ENCODE measurements at regions of chr17 and their contacts with region 1.

Region 1: DNA sequence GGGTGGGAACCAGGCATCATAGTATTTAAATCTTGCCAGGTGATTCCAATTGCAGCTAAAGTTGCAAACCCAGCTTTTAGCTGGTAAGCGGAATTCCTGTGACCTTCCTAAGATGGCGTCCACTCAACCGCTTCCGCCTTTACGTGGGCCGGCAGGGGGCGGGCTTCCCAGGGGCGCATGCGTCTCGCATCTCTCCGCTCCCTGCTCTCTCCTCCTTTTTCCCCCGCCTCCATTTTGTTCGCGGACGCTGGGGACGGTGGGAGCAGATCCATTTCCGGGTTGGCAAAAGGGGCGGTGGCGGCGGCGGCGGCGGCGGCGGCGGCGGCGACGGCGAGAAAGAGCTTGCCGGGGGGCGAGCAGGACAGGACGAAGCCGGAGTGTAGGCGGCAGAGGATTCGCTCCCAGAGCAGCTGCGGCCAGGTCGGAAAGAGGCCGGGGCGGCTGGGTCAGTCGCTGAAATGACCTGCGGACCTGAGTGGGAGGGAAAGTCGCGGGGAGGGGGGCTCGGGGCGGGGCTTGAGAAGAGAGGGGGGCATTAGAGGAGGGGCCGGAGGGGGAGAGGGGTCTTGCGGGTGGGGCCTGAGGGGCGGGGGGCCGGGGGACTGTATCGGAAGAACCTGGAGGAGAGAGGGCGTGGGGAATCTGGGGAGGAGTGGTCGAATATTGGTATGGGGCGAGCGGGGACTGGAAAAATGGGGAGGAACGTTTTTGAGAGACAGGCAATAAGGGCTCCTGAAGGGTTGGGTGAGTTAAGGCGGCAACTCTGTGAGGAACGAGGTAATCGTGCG is at the start of gene WIPF2:
- DNase-seq: peak; percentile 89
- H3K4me3 ChIP-seq: peak within 1 kb of the TSS; percentile 96
- H3K27ac ChIP-seq: peak within 1 kb of the TSS; percentile 91
- H3K27me3 ChIP-seq: no peaks in the 10 kb centered on the region
- CTCF ChIP-seq: peak; percentile 79
- polyA plus RNA-seq, gene WIPF2: 8.1 and 8.6 TPM in 2 replicates

Region 2: GRCh38 chr17:40180694-40181093 is 38.6 kb before region 1 on chr17:
- CTCF ChIA-PET with region 1: no interaction called
- POLR2A ChIA-PET with region 1: no interaction called
- DNase-seq: no peak
- H3K4me3 ChIP-seq: no peak overlapping the region
- H3K27ac ChIP-seq: no peak overlapping the region
- H3K27me3 ChIP-seq: no peaks in the 10 kb centered on the region
- CTCF ChIP-seq: no peak

Region 3: GRCh38 chr17:40191237-40192208 is 27.7 kb before region 1 on chr17:
- CTCF ChIA-PET with region 1: interaction called, 20 read pairs
- POLR2A ChIA-PET with region 1: no interaction called
- DNase-seq: no peak
- H3K4me3 ChIP-seq: peak overlapping the region; percentile 61
- H3K27ac ChIP-seq: peak overlapping the region; percentile 61
- H3K27me3 ChIP-seq: no peaks in the 10 kb centered on the region
- CTCF ChIP-seq: peak; percentile 76

Region 4: DNA sequence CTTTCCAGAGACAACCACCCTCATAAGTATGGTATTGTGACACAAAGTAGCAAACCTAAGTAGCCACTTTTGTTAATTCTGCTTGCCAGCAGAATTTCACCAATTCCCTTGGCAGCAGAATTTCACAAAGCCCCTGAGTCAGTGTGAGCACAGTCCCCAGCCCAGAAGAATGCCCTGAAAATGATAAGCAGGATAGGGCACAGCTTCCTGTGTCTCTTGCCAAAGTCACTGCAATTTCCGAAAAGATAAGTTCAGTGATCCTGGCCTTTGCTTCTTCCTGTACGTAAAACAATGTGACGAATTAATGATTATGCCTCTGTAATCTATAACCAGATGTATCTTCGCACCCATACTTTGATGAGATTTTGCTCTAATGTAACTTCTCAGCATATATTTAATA is 16.1 kb before region 1 on chr17:
- CTCF ChIA-PET with region 1: interaction called, 41 read pairs
- POLR2A ChIA-PET with region 1: interaction called, 3 read pairs
- DNase-seq: no peak
- H3K4me3 ChIP-seq: no peak overlapping the region
- H3K27ac ChIP-seq: no peak overlapping the region
- H3K27me3 ChIP-seq: peaks cover 6% of the 10 kb centered on the region
- CTCF ChIP-seq: no peak

Region 5: DNA sequence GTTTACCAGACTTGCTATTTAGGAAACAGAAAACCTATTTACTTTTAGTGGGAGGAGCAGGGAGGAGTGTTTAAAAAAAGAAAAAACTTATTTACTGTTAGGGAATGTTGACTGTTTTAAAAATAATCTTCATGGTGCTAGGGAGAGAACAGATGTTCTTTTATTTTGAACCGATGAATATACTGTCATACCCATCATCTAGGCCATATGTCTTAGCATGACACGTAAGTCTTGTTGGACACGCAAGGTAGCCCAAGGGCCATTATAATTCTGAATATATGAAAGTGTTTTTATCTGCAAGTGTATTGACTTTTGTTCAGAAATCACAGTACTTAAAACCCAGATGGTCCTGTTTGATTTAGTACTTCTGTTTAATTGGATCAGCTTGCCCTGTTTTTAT is 11.4 kb after region 1 on chr17:
- CTCF ChIA-PET with region 1: interaction called, 22 read pairs
- POLR2A ChIA-PET with region 1: interaction called, 3 read pairs
- DNase-seq: no peak
- H3K4me3 ChIP-seq: no peak overlapping the region
- H3K27ac ChIP-seq: no peak overlapping the region
- H3K27me3 ChIP-seq: no peaks in the 10 kb centered on the region
- CTCF ChIP-seq: no peak

Region 6: DNA sequence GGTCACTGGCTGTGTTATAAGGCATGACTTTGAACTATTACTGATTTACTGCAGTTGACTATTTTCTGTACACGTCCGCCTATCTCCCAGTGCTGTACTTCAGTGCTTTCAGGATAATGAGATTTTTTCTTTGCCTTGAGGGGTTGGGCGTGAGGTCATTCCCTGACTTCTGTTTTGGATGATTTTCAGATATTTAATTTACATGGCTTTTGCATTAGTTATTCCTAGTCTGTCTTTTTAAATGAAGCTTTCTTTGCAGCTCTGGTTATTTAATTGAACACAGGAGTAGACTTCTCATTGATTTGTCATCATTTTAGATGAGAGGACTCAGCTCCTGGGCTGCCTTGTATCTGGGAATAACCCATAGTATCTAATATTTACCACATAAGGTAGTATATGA is 23.5 kb after region 1 on chr17:
- CTCF ChIA-PET with region 1: interaction called, 29 read pairs
- POLR2A ChIA-PET with region 1: interaction called, 3 read pairs
- DNase-seq: no peak
- H3K4me3 ChIP-seq: no peak overlapping the region
- H3K27ac ChIP-seq: no peak overlapping the region
- H3K27me3 ChIP-seq: no peaks in the 10 kb centered on the region
- CTCF ChIP-seq: no peak

Region 7: GRCh38 chr17:40287494-40288369 is 68.5 kb after region 1 on chr17 and contains the start of gene CDC6:
- CTCF ChIA-PET with region 1: interaction called, 27 read pairs
- POLR2A ChIA-PET with region 1: interaction called, 9 read pairs
- DNase-seq: peak; percentile 97
- H3K4me3 ChIP-seq: peak within 1 kb of the TSS; percentile 81
- H3K27ac ChIP-seq: peak within 1 kb of the TSS; percentile 4
- H3K27me3 ChIP-seq: no peaks in the 10 kb centered on the region
- CTCF ChIP-seq: no peak
- polyA plus RNA-seq, gene CDC6: 8.6 and 9.1 TPM in 2 replicates

Region 8: DNA sequence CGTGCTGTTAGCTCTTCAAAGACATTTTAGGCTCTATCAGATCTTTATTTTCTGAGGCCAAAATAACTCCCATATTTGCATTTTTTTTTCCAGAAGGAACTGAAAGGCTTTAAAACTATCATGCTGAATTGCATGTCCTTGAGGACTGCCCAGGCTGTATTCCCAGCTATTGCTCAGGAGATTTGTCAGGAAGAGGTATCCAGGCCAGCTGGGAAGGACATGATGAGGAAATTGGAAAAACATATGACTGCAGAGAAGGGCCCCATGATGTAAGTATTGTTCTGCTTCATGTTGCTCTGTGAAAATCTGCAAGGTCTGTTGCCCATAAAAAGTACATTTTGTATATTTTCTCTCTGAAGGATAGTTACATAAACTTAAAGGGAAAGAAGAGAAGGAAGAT is 74.1 kb after region 1 on chr17:
- CTCF ChIA-PET with region 1: interaction called, 27 read pairs
- POLR2A ChIA-PET with region 1: interaction called, 9 read pairs
- DNase-seq: no peak
- H3K4me3 ChIP-seq: no peak overlapping the region
- H3K27ac ChIP-seq: no peak overlapping the region
- H3K27me3 ChIP-seq: no peaks in the 10 kb centered on the region
- CTCF ChIP-seq: no peak